ENCODE measurements at regions of chr1 and their contacts with region 1.

Region 1: GRCh38 chr1:243255791-243256512 is at the start of gene SDCCAG8:
- DNase-seq: peak; percentile 97
- H3K4me3 Mint-ChIP-seq: peak within 1 kb of the TSS; percentile 95
- H3K27ac Mint-ChIP-seq: peak within 1 kb of the TSS; percentile 100
- H3K4me1 Mint-ChIP-seq: peaks cover 40% of the 10 kb centered on the region
- H3K27me3 Mint-ChIP-seq: peaks cover 3% of the 10 kb centered on the region
- total RNA-seq, gene SDCCAG8: 20.7 to 23.2 TPM

Region 2: DNA sequence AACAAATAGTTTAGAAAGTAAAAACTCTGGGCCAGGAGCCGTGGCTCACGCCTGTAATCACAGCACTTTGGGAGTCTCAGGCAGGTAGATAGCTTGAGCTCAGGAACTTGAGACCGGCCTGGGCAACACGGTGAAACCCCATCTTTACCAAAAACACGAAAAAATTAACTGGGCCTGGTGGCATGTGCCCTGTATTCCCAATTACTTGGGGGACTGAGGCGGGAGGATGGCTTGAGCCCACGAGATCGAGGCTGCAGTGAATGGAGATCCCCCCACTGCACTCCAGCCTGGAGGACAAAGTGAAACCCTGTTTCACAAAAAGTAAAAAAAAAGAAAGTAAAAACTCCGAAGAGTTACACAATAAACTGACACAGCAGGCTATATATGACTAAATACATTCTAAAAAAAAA is 11.5 kb before region 1 on chr1:
- CTCF ChIA-PET with region 1: no interaction called
- POLR2A ChIA-PET with region 1: no interaction called
- intact Hi-C with region 1: no loop called
- DNase-seq: no peak
- H3K4me3 Mint-ChIP-seq: no peak overlapping the region
- H3K27ac Mint-ChIP-seq: no peak overlapping the region
- H3K4me1 Mint-ChIP-seq: peaks cover 11% of the 10 kb centered on the region
- H3K27me3 Mint-ChIP-seq: no peaks in the 10 kb centered on the region

Region 3: DNA sequence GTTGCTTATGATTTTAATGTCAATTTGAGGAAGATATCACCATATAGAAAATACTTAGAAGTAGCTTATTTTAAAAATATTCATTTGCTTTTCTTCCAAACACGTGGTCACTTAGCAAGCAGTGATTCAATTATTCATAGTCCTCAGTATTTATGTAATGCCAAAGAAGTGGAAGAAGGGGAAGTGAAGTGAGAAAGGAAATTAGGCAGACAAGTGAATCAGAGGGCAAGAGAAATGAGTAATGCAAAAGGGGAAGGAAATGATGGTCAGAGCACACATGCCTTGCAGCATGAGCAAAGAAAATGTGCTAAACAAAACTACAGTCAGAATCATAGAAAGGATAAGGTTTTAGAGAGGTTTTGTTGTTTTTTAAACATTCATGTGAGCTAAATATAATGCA is 31.7 kb after region 1 on chr1:
- CTCF ChIA-PET with region 1: interaction called, 3 read pairs
- POLR2A ChIA-PET with region 1: interaction called, 10 read pairs
- intact Hi-C with region 1: loop called (anchors 1 kb)
- DNase-seq: no peak
- H3K4me3 Mint-ChIP-seq: no peak overlapping the region
- H3K27ac Mint-ChIP-seq: peak overlapping the region; percentile 57
- H3K4me1 Mint-ChIP-seq: peaks cover 17% of the 10 kb centered on the region
- H3K27me3 Mint-ChIP-seq: no peaks in the 10 kb centered on the region

Region 4: GRCh38 chr1:243325305-243325890 is 69.4 kb after region 1 on chr1:
- CTCF ChIA-PET with region 1: no interaction called
- POLR2A ChIA-PET with region 1: no interaction called
- intact Hi-C with region 1: loop called (anchors 5 kb)
- DNase-seq: no peak
- H3K4me3 Mint-ChIP-seq: no peak overlapping the region
- H3K27ac Mint-ChIP-seq: no peak overlapping the region
- H3K4me1 Mint-ChIP-seq: no peaks in the 10 kb centered on the region
- H3K27me3 Mint-ChIP-seq: no peaks in the 10 kb centered on the region

Region 5: DNA sequence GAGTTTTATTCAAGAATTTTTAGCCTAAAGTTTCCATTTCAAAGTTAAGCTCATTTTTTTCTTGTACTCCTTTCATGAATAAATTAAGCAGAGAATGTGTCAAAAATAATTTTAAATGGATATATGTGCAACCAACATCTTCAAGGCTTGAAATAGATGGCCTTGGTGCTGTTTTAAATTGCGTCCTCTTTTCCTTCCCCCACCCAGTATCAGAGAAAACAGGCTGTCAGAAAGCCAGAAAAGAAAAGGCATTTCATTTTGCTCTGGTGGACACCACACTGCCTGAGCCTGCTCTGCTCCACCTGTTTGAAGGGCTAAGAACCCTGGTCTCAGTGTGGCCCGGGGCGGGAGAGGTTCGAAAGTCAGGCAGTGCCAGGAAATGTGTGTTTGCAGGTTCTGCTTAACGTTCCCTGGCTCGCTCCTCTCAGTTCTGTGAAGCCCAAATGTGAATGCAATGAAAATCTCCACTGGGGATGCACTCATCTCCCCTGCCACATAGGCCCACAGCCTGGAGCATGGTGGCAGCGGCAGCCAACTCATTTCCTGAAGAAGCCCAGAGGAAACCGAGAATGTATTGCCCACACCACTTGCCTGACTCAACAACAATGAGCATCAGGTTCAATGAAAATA is 134.3 kb after region 1 on chr1:
- CTCF ChIA-PET with region 1: no interaction called
- POLR2A ChIA-PET with region 1: no interaction called
- intact Hi-C with region 1: no loop called
- DNase-seq: peak; percentile 45
- H3K4me3 Mint-ChIP-seq: no peak overlapping the region
- H3K27ac Mint-ChIP-seq: no peak overlapping the region
- H3K4me1 Mint-ChIP-seq: peaks cover 5% of the 10 kb centered on the region
- H3K27me3 Mint-ChIP-seq: no peaks in the 10 kb centered on the region